CD4-positive, alpha-beta T cell (primary cell): ENCODE measurements at regions of chr19 and their contacts with region 1.

Region 1: GRCh38 chr19:18831524-18832305 is at the start of gene UPF1:
- DNase-seq: peak; percentile 90 to 99 (median 96)
- ATAC-seq: peak; percentile 75
- H3K4me3 ChIP-seq: peak within 1 kb of the TSS; percentile 64
- H3K4me3 Mint-ChIP-seq: peak within 1 kb of the TSS; percentile 89
- H3K27ac ChIP-seq: peak within 1 kb of the TSS; percentile 64 to 81
- H3K27ac Mint-ChIP-seq: peak within 1 kb of the TSS; percentile 88
- H3K4me1 ChIP-seq: peaks cover 45% of the 10 kb centered on the region
- H3K4me1 Mint-ChIP-seq: peaks cover 39% of the 10 kb centered on the region
- H3K27me3 ChIP-seq: no peaks in the 10 kb centered on the region
- H3K27me3 Mint-ChIP-seq: no peaks in the 10 kb centered on the region
- CTCF ChIP-seq: no peak
- total RNA-seq, gene UPF1: 146 to 150 TPM

Region 2: DNA sequence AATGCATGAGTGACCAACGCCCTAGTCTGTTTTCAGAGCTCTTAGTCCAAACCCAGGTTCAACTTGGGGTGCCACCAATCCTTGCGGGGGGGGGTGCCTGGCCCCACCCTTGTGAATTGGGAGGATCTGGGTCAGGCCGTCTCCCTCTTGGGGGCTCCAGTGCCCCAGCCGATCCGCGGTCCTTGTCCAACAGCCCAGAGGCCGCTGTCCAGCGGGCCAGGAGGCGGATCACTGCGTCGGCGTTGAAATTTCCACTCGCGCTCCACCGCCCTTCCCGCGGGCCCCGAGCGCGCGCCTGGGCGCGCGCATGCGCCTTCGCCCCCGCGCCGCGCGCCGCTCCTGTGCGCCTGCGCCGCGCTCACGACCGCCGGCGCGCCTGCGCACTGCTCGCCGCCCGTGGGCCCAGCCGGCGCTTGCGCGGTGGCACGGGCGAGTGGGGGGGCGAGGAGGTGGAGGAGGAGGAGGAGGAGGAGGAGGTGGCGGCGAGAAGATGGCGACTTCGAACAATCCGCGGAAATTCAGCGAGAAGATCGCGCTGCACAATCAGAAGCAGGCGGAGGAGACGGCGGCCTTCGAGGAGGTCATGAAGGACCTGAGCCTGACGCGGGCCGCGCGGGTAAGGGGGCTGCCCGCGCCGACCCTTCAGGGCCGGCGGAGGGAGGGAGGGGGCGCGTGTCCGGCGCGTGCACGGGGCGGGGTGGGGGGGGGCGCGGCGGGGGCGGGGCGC is 148.3 kb before region 1 on chr19 and contains the start of gene CRTC1:
- CTCF ChIA-PET with region 1: no interaction called
- POLR2A ChIA-PET with region 1: interaction called, 4 read pairs
- intact Hi-C with region 1: loop called in 1 of 2 experiments (anchors 1 kb)
- DNase-seq: peak; percentile 92 to 97 (median 94)
- ATAC-seq: peak; percentile 86
- H3K4me3 ChIP-seq: peak within 1 kb of the TSS; percentile 76
- H3K4me3 Mint-ChIP-seq: peak within 1 kb of the TSS; percentile 92
- H3K27ac ChIP-seq: peak within 1 kb of the TSS; percentile 29 to 65
- H3K27ac Mint-ChIP-seq: peak within 1 kb of the TSS; percentile 77
- H3K4me1 ChIP-seq: peaks cover 30% of the 10 kb centered on the region
- H3K4me1 Mint-ChIP-seq: peaks cover 36% of the 10 kb centered on the region
- H3K27me3 ChIP-seq: no peaks in the 10 kb centered on the region
- H3K27me3 Mint-ChIP-seq: no peaks in the 10 kb centered on the region
- CTCF ChIP-seq: no peak
- total RNA-seq, gene CRTC1: 11.8 to 12.2 TPM

Region 3: GRCh38 chr19:18700501-18701249 is 131.0 kb before region 1 on chr19:
- CTCF ChIA-PET with region 1: no interaction called
- POLR2A ChIA-PET with region 1: interaction called, 13 read pairs
- intact Hi-C with region 1: loop called in 1 of 2 experiments (anchors 5 kb)
- DNase-seq: peak; percentile 59 to 81 (median 70)
- ATAC-seq: peak; percentile 97
- H3K4me3 ChIP-seq: peak overlapping the region; percentile 66
- H3K4me3 Mint-ChIP-seq: peak overlapping the region; percentile 91
- H3K27ac ChIP-seq: peak overlapping the region; percentile 59 to 87
- H3K27ac Mint-ChIP-seq: peak overlapping the region; percentile 88
- H3K4me1 ChIP-seq: peaks cover 43% of the 10 kb centered on the region
- H3K4me1 Mint-ChIP-seq: peaks cover 42% of the 10 kb centered on the region
- H3K27me3 ChIP-seq: no peaks in the 10 kb centered on the region
- H3K27me3 Mint-ChIP-seq: no peaks in the 10 kb centered on the region
- CTCF ChIP-seq: no peak

Region 4: DNA sequence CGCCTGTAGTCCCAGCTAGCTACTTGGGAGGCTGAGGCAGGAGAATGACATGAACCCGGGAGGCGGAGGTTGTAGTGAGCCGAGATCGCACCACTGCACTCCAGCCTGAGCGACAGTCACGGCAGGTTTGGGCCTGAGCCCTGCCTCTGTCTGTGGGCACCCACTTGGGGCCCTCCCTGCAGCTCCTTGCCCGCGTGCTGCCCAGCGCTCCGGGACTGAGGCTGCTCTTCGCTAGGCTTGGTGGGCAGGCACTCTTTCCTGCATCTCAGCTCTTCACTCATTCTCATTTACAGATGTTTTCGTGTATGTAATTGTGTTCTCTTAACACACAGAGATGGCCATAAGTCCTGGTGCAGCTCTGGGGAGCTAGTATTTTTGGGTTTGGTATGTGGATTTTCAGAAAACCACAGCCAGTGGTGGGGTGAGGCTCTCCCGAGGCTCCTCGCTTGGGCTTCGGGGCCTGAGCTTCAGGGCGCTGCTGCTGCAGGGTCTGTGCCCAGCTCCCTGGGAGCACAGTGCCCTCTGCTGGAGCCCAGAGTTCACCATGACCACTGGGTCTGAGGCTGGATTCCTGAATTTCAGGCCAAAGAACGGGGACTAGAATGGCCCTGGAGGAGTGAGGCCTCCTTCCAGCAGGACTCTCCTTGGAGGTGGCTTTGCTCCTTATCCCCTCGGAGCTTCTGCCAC is 15.3 kb after region 1 on chr19:
- CTCF ChIA-PET with region 1: interaction called, 15 read pairs
- POLR2A ChIA-PET with region 1: interaction called, 22 read pairs
- intact Hi-C with region 1: no loop called
- DNase-seq: peak; percentile 45 to 82 (median 63)
- ATAC-seq: peak; percentile 71
- H3K4me3 ChIP-seq: no peak overlapping the region
- H3K4me3 Mint-ChIP-seq: peak overlapping the region; percentile 74
- H3K27ac ChIP-seq: no peak overlapping the region
- H3K27ac Mint-ChIP-seq: peak overlapping the region; percentile 68
- H3K4me1 ChIP-seq: peaks cover 75% of the 10 kb centered on the region
- H3K4me1 Mint-ChIP-seq: peaks cover 59% of the 10 kb centered on the region
- H3K27me3 ChIP-seq: no peaks in the 10 kb centered on the region
- H3K27me3 Mint-ChIP-seq: no peaks in the 10 kb centered on the region
- CTCF ChIP-seq: peak; percentile 69